ENCODE measurements at regions of chr11 and their contacts with region 1.

Region 1: DNA sequence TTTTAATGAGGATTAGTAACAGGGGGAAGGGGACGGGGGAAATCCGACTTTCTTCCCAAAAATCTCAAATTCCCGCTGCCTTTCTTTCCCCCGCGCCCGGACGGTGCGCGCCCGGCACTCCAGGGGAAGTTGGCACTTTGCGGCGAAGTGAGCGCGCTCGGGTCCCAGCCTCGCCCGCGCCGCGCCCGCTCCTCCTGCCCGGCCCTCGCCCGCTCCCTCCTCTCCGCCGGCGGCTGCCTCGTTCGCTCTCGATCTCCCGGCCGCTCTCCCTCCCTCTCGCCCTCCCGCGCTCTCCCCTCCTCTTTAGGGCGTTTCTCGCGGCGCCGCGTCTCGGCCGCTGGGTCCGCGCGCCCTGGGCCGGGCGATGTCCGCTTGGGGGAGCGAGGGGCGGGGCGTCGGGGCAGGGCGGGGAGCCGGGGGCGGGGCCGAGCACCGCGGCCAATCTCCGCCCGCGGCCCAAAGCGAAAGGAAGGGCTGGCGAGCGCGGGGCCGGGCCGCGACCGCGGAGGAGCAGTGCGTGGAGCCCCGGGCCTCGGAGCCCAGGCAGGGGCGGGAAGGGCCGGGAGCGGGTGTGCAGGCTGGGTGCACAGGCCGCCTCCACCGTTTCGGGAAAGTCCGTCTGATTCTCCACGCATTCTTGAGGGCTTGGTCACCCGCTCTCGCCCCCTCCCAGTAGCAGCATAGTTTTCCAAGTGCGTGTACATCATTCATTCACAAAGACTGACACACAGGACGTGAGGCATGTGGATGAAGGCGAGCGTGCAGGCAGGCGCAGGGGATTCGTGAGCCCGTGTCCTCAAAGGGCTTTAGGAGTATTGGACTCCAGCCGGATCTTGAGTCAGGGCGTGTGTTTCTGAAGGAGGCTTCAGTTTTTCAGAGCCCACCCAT is 65.1 kb downstream of the ETS1 start:
- DNase-seq: peak; percentile 95
- ATAC-seq: peak; percentile 70
- H3K4me3 Mint-ChIP-seq: peak overlapping the region; percentile 96
- H3K27ac Mint-ChIP-seq: peak overlapping the region; percentile 99
- H3K4me1 Mint-ChIP-seq: peaks cover 42% of the 10 kb centered on the region
- H3K27me3 Mint-ChIP-seq: no peaks in the 10 kb centered on the region

Region 2: GRCh38 chr11:128251140-128251539 is 271.2 kb before region 1 on chr11:
- CTCF ChIA-PET with region 1: no interaction called
- POLR2A ChIA-PET with region 1: interaction called, 10 read pairs
- intact Hi-C with region 1: no loop called
- DNase-seq: no peak
- ATAC-seq: no peak
- H3K4me3 Mint-ChIP-seq: no peak overlapping the region
- H3K27ac Mint-ChIP-seq: no peak overlapping the region
- H3K4me1 Mint-ChIP-seq: no peaks in the 10 kb centered on the region
- H3K27me3 Mint-ChIP-seq: no peaks in the 10 kb centered on the region

Region 3: DNA sequence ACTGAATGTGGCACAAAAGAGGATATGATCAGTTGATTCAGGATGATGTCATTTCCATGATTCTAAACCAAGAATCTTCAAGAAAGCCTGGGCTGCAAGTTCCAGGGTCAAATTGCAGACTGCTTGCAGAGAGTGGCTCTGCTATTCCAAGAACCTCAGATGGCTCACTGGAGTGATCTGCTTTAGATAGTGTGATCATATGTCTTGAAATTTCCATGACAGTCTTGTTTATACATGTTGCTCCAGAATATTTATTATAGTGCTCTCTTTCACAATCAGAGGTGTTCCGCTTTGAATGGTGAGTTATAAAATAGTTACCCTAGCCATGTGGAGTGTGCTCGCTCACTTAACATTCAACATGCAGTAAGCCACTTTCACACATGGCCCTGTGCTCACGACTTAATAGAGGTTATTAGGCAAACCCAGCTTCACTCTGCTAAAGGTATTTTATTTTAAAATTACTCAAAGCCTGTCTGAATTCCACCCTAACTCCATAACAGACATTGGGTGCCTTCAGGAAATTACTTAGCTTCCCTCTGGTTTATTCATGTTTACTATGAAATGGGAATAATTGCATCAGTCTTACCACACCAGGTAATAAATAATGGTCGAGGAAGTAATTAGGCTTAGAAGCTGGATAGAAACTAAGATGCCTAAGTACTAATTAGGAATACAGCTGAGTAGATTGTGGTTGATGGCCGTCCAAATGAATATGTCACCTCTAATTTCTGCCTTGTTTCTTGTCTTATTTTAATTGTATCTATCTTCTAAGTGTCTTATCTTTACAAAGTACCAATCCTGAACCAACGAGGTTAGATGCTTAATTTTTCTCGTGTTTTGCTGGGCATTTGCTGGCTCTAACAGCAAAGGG is 122.8 kb before region 1 on chr11:
- CTCF ChIA-PET with region 1: no interaction called
- POLR2A ChIA-PET with region 1: no interaction called
- intact Hi-C with region 1: no loop called
- DNase-seq: peak; percentile 22
- ATAC-seq: peak; percentile 77
- H3K4me3 Mint-ChIP-seq: no peak overlapping the region
- H3K27ac Mint-ChIP-seq: no peak overlapping the region
- H3K4me1 Mint-ChIP-seq: peaks cover 31% of the 10 kb centered on the region
- H3K27me3 Mint-ChIP-seq: no peaks in the 10 kb centered on the region

Region 4: GRCh38 chr11:128422576-128423370 is 99.5 kb before region 1 on chr11:
- CTCF ChIA-PET with region 1: interaction called, 3 read pairs
- POLR2A ChIA-PET with region 1: interaction called, 6 read pairs
- intact Hi-C with region 1: loop called (anchors 2 to 5 kb)
- DNase-seq: peak; percentile 97
- ATAC-seq: peak; percentile 94
- H3K4me3 Mint-ChIP-seq: peak overlapping the region; percentile 36
- H3K27ac Mint-ChIP-seq: peak overlapping the region; percentile 82
- H3K4me1 Mint-ChIP-seq: peaks cover 53% of the 10 kb centered on the region
- H3K27me3 Mint-ChIP-seq: no peaks in the 10 kb centered on the region

Region 5: DNA sequence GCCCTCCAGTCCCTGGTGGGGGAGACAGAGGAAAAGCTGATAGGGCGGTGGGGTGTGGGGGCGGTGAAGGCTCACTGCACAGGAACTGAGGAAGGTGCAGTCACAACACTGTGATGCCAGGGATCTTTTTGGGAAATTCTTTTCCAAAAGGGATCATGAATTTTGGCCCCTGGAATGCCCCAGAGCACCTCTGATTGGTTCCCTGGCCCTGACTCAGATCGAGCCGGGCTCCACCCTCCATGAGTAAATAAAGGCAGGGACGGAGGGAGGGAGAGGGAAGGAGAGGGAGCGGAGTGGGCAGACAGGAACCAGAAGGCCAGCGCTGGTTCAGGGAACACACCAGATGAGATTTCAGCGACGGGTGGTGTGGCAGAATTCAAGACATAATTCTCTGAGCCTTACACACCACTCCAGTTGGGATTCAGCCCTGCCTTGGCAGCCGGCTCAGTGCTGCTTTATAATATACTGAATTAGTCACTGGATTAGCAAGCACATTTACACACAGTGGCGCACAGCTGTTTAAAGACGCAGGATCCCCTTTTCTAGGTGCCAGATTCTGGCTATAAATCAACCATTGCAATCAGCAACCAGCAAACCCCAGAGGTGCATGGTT is 15.2 kb before region 1 on chr11:
- CTCF ChIA-PET with region 1: interaction called, 28 read pairs
- POLR2A ChIA-PET with region 1: interaction called, 12 read pairs
- intact Hi-C with region 1: loop called (anchors 1 kb)
- DNase-seq: peak; percentile 80
- ATAC-seq: peak; percentile 58
- H3K4me3 Mint-ChIP-seq: peak overlapping the region; percentile 96
- H3K27ac Mint-ChIP-seq: peak overlapping the region; percentile 98
- H3K4me1 Mint-ChIP-seq: peaks cover 89% of the 10 kb centered on the region
- H3K27me3 Mint-ChIP-seq: no peaks in the 10 kb centered on the region

Region 6: GRCh38 chr11:128582496-128583366 is 60.4 kb after region 1 on chr11:
- CTCF ChIA-PET with region 1: interaction called, 5 read pairs
- POLR2A ChIA-PET with region 1: interaction called, 13 read pairs
- intact Hi-C with region 1: loop called (anchors 1 kb)
- DNase-seq: peak; percentile 37
- ATAC-seq: no peak
- H3K4me3 Mint-ChIP-seq: peak overlapping the region; percentile 48
- H3K27ac Mint-ChIP-seq: peak overlapping the region; percentile 75
- H3K4me1 Mint-ChIP-seq: peaks cover 61% of the 10 kb centered on the region
- H3K27me3 Mint-ChIP-seq: peaks cover 2% of the 10 kb centered on the region

Region 7: DNA sequence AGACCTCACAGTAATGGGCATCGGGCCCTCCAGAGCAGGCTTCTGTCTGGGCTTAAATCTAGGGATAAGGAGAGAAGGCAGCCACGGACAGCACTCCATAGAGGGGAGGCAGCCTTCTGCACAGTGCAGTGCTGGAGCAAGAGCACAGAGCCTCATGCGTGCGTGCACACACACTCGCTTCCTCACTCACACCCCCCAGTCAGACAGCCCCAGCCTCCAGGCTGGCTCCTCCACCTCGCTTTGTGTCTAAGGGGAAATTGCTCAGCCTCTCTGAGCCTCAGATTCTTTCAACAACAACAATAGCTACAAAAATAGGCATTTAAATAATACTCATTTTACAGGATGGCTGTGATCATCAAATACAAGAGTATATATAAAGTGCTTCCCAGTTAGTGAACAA is 91.7 kb after region 1 on chr11:
- CTCF ChIA-PET with region 1: no interaction called
- POLR2A ChIA-PET with region 1: no interaction called
- intact Hi-C with region 1: no loop called
- DNase-seq: no peak
- ATAC-seq: no peak
- H3K4me3 Mint-ChIP-seq: no peak overlapping the region
- H3K27ac Mint-ChIP-seq: no peak overlapping the region
- H3K4me1 Mint-ChIP-seq: peaks cover 36% of the 10 kb centered on the region
- H3K27me3 Mint-ChIP-seq: no peaks in the 10 kb centered on the region

Region 8: GRCh38 chr11:128831174-128832120 is 309.1 kb after region 1 on chr11:
- CTCF ChIA-PET with region 1: interaction called, 11 read pairs
- POLR2A ChIA-PET with region 1: interaction called, 3 read pairs
- intact Hi-C with region 1: loop called (anchors 5 kb)
- DNase-seq: peak; percentile 93
- ATAC-seq: peak; percentile 81
- H3K4me3 Mint-ChIP-seq: peak overlapping the region; percentile 57
- H3K27ac Mint-ChIP-seq: peak overlapping the region; percentile 93
- H3K4me1 Mint-ChIP-seq: peaks cover 21% of the 10 kb centered on the region
- H3K27me3 Mint-ChIP-seq: no peaks in the 10 kb centered on the region

Measured in activated CD4-positive, alpha-beta T cell treated with anti-CD3 and anti-CD28 coated beads for 36 hours (primary cell).